Activated CD8-positive, alpha-beta T cell treated with anti-CD3 and anti-CD28 coated beads for 36 hours (primary cell): ENCODE measurements at regions of chr9 and their contacts with region 1.

Region 1: DNA sequence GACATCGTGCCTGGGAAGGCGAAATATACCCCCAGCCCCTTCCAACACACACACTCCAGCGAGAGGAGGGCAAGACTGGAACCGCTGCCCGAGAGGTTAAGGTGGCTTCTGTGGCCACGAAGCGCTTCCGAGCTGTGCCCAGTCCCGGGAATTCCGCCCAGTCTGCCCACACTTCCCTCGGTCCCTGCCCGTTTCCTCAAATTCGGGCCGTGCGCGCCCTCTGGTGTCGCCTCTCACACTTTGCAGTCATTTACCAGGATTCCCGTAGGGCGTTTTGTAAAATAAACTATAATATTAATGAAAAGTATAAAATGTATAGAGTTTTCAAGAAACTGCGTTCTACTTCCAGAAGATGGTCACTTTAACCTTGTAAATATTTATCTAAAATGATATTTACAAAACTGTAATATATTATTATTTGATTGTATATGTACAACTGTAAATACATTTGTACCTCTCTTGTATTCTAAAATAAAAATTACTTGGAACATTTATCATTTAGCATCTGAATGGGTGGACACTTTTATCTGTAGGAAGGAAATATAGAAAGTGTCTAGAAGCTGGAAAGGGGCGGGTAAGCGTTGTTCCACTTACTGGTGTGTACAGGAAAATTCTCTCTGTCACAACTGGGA is 11.0 kb upstream of the EXOSC2 start:
- DNase-seq: peak; percentile 70
- ATAC-seq: peak; percentile 29
- H3K4me3 Mint-ChIP-seq: peak overlapping the region; percentile 83
- H3K27ac Mint-ChIP-seq: peak overlapping the region; percentile 79
- H3K4me1 Mint-ChIP-seq: peaks cover 7% of the 10 kb centered on the region
- H3K27me3 Mint-ChIP-seq: peaks cover 12% of the 10 kb centered on the region
- CTCF ChIP-seq: peak; percentile 95

Region 2: GRCh38 chr9:130453487-130453886 is 229.1 kb before region 1 on chr9:
- CTCF ChIA-PET with region 1: interaction called, 124 read pairs
- POLR2A ChIA-PET with region 1: no interaction called
- intact Hi-C with region 1: no loop called
- DNase-seq: no peak
- ATAC-seq: no peak
- H3K4me3 Mint-ChIP-seq: no peak overlapping the region
- H3K27ac Mint-ChIP-seq: no peak overlapping the region
- H3K4me1 Mint-ChIP-seq: no peaks in the 10 kb centered on the region
- H3K27me3 Mint-ChIP-seq: peaks cover 14% of the 10 kb centered on the region
- CTCF ChIP-seq: no peak

Region 3: GRCh38 chr9:130461218-130461630 is 221.4 kb before region 1 on chr9:
- CTCF ChIA-PET with region 1: interaction called, 124 read pairs
- POLR2A ChIA-PET with region 1: no interaction called
- intact Hi-C with region 1: loop called (anchors 2 kb)
- DNase-seq: peak; percentile 79
- ATAC-seq: peak; percentile 85
- H3K4me3 Mint-ChIP-seq: no peak overlapping the region
- H3K27ac Mint-ChIP-seq: no peak overlapping the region
- H3K4me1 Mint-ChIP-seq: no peaks in the 10 kb centered on the region
- H3K27me3 Mint-ChIP-seq: peaks cover 15% of the 10 kb centered on the region
- CTCF ChIP-seq: peak; percentile 95

Region 4: DNA sequence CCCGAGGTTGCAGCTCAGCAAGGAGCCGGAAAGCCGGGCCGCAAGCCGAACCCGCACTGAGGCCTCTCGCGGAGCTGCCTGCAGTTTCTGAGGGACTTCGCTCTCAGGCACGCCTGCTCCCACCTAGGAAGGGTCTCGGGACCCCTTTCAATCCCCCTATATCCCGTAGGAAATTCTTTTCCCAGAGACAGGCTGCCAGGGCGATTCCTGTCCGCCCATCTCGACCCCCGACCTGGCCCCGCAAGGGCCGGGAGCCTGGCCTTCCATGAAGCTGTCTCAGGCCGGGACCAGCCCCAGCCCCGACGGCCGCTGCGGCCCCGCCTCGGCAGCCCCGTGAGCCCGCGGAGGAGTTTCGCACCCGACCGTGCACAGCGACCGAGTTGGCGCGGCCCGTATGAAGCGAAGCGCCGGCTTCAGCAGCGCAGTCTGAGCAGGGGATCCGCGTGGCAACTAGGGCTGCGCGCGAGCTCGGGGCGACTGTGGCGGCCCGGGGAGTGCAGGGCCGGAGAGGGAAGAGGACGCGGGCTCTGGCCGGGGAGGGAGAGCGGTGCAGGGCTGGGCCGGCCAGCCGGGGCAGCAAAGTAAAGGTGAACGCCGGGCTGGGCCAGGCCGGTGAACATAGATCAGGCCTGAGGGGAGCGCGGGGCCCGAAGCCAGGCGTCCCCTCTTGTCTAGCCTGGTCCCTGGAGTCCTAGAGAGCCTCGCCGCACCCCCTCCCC is 19.2 kb before region 1 on chr9:
- CTCF ChIA-PET with region 1: interaction called, 10 read pairs
- POLR2A ChIA-PET with region 1: interaction called, 3 read pairs
- intact Hi-C with region 1: no loop called
- DNase-seq: no peak
- ATAC-seq: peak; percentile 27
- H3K4me3 Mint-ChIP-seq: no peak overlapping the region
- H3K27ac Mint-ChIP-seq: no peak overlapping the region
- H3K4me1 Mint-ChIP-seq: peaks cover 20% of the 10 kb centered on the region
- H3K27me3 Mint-ChIP-seq: peaks cover 68% of the 10 kb centered on the region
- CTCF ChIP-seq: no peak

Region 5: DNA sequence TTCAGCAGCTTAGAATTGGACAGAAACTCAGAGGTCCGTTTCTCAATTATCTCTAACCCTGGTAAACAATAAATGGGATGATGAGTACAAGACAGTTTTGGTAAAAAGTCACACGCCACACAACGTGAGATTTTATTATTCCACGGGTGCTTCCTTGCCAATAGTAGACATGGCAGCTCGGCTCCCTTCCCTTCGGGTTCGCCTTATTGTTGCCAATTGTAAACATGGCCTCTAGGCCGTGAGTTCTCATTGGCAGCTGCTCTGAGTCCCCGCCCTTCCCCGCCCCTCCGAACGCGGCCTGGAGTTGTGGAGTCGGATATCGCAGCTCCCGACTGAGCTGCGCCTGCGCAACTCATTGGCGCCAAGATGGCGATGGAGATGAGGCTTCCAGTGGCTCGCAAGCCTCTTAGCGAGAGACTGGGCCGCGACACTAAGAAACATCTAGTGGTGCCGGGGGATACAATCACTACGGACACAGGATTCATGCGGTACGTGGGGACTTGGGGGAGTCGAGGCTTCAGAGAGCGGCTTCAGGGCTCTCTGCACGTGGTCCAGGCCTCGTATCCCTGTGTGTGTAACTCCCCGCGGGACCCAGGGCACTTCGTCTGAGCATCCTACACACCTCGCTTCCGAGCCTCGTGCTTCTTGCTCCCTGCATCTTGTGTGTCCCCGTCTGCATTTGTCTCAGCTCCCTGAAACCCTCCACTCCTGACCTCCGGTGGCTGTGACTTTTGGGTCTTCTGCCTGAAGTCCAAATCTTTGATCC is 11.0 kb after region 1 on chr9 and contains the start of gene EXOSC2:
- CTCF ChIA-PET with region 1: interaction called, 59 read pairs
- POLR2A ChIA-PET with region 1: interaction called, 7 read pairs
- intact Hi-C with region 1: no loop called
- DNase-seq: peak; percentile 99
- ATAC-seq: peak; percentile 99
- H3K4me3 Mint-ChIP-seq: peak within 1 kb of the TSS; percentile 98
- H3K27ac Mint-ChIP-seq: peak within 1 kb of the TSS; percentile 99
- H3K4me1 Mint-ChIP-seq: peaks cover 39% of the 10 kb centered on the region
- H3K27me3 Mint-ChIP-seq: no peaks in the 10 kb centered on the region
- CTCF ChIP-seq: no peak
- total RNA-seq, gene EXOSC2: 82.1 to 82.5 TPM

Region 6: GRCh38 chr9:130857864-130858738 is 175.5 kb after region 1 on chr9:
- CTCF ChIA-PET with region 1: no interaction called
- POLR2A ChIA-PET with region 1: no interaction called
- intact Hi-C with region 1: no loop called
- DNase-seq: no peak
- ATAC-seq: no peak
- H3K4me3 Mint-ChIP-seq: no peak overlapping the region
- H3K27ac Mint-ChIP-seq: no peak overlapping the region
- H3K4me1 Mint-ChIP-seq: no peaks in the 10 kb centered on the region
- H3K27me3 Mint-ChIP-seq: no peaks in the 10 kb centered on the region
- CTCF ChIP-seq: no peak